Prostate gland (tissue), 2 donors: ENCODE measurements at regions of chr20 and their contacts with region 1.

Region 1: DNA sequence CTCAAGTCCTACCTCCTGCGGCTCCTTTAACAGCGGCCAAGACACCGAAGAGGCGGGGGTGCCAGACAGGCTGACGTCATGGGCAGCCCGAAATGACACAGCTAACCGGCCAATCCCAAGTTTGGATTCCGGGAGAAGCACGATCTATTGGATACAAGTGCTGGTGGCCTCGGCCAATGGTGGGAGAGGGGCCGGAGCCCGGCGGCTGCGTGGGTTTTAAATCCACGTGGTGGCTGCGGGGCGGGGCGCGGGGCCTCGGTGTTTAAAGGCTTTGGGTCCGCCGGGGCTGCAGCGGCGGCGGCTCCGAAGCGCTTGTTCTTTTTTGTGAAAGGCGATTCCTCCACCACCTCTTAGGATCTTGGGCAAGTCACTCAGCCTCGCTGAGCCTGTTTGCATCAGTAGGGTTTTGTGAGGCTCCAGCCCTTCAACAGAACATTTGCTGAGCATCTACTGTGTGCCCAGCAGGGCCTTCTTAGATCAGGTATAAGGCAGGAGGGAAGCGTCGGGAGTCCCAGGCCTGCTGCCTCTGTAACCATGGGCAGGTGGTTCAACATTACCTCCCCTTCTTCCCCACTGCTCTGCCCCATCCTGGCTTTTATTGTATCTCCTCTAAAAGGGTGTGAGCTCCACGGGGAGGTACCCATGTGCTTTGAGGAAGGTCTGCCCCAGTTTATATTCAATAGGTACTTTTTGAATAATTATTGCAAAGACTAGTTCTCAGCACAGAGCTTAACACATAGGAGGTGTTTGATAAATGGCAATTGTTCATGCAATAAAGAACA is 8.9 kb upstream of the PMEPA1 start:
- DNase-seq: peak; percentile 99
- H3K4me3 ChIP-seq: peak overlapping the region; percentile 18 to 35
- H3K27ac ChIP-seq: peak overlapping the region; percentile 77 to 99
- H3K4me1 ChIP-seq: peaks cover 3% of the 10 kb centered on the region
- H3K27me3 ChIP-seq: no peaks in the 10 kb centered on the region
- CTCF ChIP-seq: no peak
- POLR2A ChIP-seq: no peak

Region 2: DNA sequence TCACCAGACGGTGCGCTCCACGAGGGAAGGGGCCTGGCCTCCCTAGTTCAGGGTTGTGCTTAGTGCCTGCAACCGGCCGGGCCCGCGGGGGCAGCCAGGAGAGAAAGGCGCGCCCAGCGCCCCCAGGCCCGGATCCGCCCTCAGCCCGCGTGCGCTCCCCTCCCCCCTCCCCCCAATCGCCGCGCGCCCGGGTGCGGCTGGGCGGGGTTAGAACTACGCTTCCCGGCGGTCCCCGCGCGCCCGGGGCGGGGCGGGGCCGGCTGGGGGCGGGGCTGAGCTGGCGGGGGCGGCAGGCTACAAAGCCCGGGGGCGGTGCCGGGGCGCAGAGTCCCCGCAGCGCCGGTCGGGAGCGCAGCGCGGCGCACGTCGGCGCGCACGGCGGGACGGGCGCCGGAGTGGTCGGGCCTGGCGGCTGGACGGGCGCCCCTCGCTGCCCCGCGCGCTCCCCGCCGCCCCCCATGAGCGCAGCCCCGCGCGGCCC is 327.6 kb before region 1 on chr20 and contains the start of gene RBM38:
- intact Hi-C with region 1: loop called (anchors 10 kb)
- DNase-seq: no peak
- H3K4me3 ChIP-seq: peak within 1 kb of the TSS; percentile 61 to 62
- H3K27ac ChIP-seq: peak within 1 kb of the TSS; percentile 78 to 81
- H3K4me1 ChIP-seq: peaks cover 5% of the 10 kb centered on the region
- H3K27me3 ChIP-seq: no peaks in the 10 kb centered on the region
- CTCF ChIP-seq: no peak
- POLR2A ChIP-seq: no peak
- total RNA-seq, gene RBM38: 29.9 to 104 TPM

Region 3: GRCh38 chr20:57409672-57410397 is 308.8 kb before region 1 on chr20:
- intact Hi-C with region 1: no loop called
- DNase-seq: no peak
- H3K4me3 ChIP-seq: no peak overlapping the region
- H3K27ac ChIP-seq: no peak overlapping the region
- H3K4me1 ChIP-seq: no peaks in the 10 kb centered on the region
- H3K27me3 ChIP-seq: no peaks in the 10 kb centered on the region
- CTCF ChIP-seq: no peak
- POLR2A ChIP-seq: no peak

Region 4: GRCh38 chr20:57748601-57749130 is 30.0 kb after region 1 on chr20:
- intact Hi-C with region 1: loop called (anchors 2 kb)
- DNase-seq: peak; percentile 76
- H3K4me3 ChIP-seq: peak overlapping the region; percentile 10 to 15
- H3K27ac ChIP-seq: peak overlapping the region; percentile 80 to 82
- H3K4me1 ChIP-seq: peaks cover 15% of the 10 kb centered on the region
- H3K27me3 ChIP-seq: no peaks in the 10 kb centered on the region
- CTCF ChIP-seq: no peak
- POLR2A ChIP-seq: no peak